Activated naive CD4-positive, alpha-beta T cell treated with anti-CD3 and anti-CD28 coated beads, Interleukin-2, amount 10 ng/mL, durations not matched to agents 7 days and 5 days (primary cell): ENCODE measurements at regions of chr3 and their contacts with region 1.

Region 1: DNA sequence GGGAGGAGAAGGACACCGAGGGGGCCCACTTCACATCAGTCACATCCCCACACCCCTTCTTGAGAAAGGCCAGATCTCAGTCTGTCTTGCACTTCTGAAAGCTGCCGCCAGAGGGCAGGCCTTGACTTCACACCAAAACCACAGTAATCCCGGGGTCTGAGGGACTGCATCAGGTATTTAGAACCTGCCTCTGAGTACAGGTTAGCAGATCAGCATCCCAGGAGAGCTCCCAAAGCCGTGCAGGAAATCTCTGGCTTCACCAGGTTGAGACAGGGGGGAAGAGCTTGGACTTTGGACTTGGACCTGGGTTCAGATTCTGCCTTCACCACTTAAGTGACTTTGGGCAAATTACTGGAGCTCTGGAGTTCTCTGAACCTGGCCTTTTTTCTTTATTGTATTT is 50.3 kb downstream of the LHFPL4 start:
- DNase-seq: peak; percentile 85
- H3K4me3 Mint-ChIP-seq: no peak overlapping the region
- H3K27ac Mint-ChIP-seq: no peak overlapping the region
- H3K4me1 Mint-ChIP-seq: peaks cover 2% of the 10 kb centered on the region
- H3K27me3 Mint-ChIP-seq: peaks cover 61% of the 10 kb centered on the region

Region 2: GRCh38 chr3:9416139-9416780 is 87.0 kb before region 1 on chr3:
- CTCF ChIA-PET with region 1: no interaction called
- DNase-seq: no peak
- H3K4me3 Mint-ChIP-seq: no peak overlapping the region
- H3K27ac Mint-ChIP-seq: no peak overlapping the region
- H3K4me1 Mint-ChIP-seq: peaks cover 24% of the 10 kb centered on the region
- H3K27me3 Mint-ChIP-seq: no peaks in the 10 kb centered on the region

Region 3: GRCh38 chr3:9491506-9491905 is 11.8 kb before region 1 on chr3:
- CTCF ChIA-PET with region 1: interaction called, 17 read pairs
- DNase-seq: no peak
- H3K4me3 Mint-ChIP-seq: no peak overlapping the region
- H3K27ac Mint-ChIP-seq: no peak overlapping the region
- H3K4me1 Mint-ChIP-seq: no peaks in the 10 kb centered on the region
- H3K27me3 Mint-ChIP-seq: no peaks in the 10 kb centered on the region

Region 4: DNA sequence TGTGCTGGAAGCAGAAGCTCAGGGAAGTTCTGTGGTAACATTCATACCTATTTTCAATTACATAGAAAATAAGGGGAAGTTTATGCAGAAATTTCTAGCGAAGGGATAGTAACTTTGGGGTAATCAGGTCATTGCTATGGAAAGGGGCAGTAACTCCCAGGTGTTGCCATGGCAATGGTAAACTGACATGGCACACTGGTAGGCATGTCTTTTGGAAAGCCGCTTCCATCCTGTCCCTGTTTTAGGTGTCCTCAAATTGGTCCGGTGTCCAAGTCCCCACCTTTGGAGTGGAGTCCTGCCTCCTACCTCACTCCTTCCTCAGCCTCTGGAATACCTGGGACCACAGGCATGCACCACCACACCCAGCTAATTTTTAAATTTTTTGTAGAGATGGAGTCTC is 123.0 kb after region 1 on chr3:
- CTCF ChIA-PET with region 1: no interaction called
- DNase-seq: no peak
- H3K4me3 Mint-ChIP-seq: no peak overlapping the region
- H3K27ac Mint-ChIP-seq: no peak overlapping the region
- H3K4me1 Mint-ChIP-seq: no peaks in the 10 kb centered on the region
- H3K27me3 Mint-ChIP-seq: peaks cover 21% of the 10 kb centered on the region

Region 5: GRCh38 chr3:9916734-9917680 is 413.7 kb after region 1 on chr3 and contains the start of gene IL17RC:
- CTCF ChIA-PET with region 1: no interaction called
- DNase-seq: peak; percentile 55
- H3K4me3 Mint-ChIP-seq: peak within 1 kb of the TSS; percentile 68
- H3K27ac Mint-ChIP-seq: no peak within 1 kb of the TSS
- H3K4me1 Mint-ChIP-seq: peaks cover 16% of the 10 kb centered on the region
- H3K27me3 Mint-ChIP-seq: peaks cover 57% of the 10 kb centered on the region

Region 6: DNA sequence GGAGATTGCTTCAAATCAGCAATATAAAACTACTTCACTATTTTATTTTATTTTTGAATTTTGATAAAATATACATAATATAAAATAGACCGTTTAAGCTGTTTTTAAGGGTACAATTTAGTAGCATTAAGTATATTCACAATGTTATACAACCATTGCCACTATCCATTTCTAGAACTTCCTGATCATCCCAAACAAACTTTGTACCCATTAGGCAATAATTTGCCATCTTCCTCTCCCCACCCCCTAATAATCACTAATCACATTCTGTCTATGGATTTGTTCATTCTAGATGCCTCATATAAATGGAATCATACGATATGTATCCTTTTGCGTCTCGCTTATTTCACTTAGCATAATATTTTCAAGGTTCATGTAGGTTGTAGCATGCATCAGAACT is 551.8 kb after region 1 on chr3:
- CTCF ChIA-PET with region 1: no interaction called
- DNase-seq: no peak
- H3K4me3 Mint-ChIP-seq: no peak overlapping the region
- H3K27ac Mint-ChIP-seq: no peak overlapping the region
- H3K4me1 Mint-ChIP-seq: no peaks in the 10 kb centered on the region
- H3K27me3 Mint-ChIP-seq: no peaks in the 10 kb centered on the region